AG04449 (cell line): ENCODE measurements at regions of chr5 and their contacts with region 1.

Region 1: GRCh38 chr5:79857714-79858409 is 133.2 kb downstream of the MTX3 start:
- DNase-seq: no peak
- H3K4me3 ChIP-seq: no peak overlapping the region
- CTCF ChIP-seq: peak; percentile 86

Region 2: DNA sequence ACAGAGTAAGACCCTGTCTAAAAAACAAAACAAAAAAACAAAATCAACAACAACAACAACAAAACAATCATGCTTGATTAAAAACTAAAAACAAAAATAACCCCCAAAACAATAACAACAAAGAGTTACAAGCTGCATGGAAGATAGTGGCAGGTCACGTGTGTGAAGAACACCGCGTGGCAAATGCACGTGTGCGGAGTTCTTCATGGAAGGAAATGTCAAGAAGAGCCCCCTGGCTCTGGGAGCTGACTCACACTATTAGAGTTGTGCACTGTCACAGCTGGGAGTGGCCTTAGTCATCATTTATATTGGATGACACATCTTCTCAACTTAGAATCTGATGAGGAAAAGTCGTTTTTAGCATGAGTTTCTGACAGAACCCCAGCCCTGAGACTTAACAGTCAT is 511.4 kb before region 1 on chr5:
- CTCF ChIA-PET with region 1: no interaction called
- POLR2A ChIA-PET with region 1: no interaction called
- DNase-seq: no peak
- H3K4me3 ChIP-seq: no peak overlapping the region
- CTCF ChIP-seq: no peak

Region 3: DNA sequence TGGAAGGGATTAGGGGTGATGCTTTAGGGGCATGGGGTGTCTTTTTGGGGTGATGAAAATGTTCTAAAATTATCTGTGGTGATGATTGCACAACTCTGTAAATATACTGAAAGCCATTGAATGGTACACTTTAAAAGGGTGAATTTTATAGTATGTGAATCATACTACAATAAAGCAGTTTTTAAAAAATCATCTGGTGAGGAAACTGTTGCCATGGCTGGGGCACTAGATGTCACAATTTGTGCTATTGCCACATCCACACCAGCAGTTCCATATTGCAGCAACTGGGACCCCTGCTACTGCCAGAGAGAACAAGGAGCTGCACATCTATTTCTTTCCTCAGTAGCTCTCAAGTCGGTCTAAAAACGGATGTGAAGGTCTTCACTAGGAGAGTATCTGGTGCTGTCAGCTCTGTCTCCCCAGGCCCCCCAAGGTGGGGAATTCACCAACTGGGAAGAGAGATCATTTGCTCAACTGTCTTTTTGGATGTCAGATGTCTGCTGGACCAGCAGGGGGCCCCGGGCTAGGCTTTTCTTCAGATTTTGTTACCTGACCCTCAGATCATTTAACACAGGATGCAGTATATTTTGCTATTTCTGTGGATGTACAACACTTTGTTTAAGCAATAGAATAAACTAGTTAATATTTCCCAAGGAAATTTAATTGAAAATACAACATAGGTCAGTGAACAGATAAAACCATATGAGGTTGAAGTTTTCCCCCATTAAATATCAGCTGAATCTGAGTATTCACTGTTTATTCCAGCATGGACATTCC is 155.1 kb before region 1 on chr5:
- CTCF ChIA-PET with region 1: interaction called, 21 read pairs
- POLR2A ChIA-PET with region 1: no interaction called
- DNase-seq: no peak
- H3K4me3 ChIP-seq: no peak overlapping the region
- CTCF ChIP-seq: peak; percentile 45

Region 4: GRCh38 chr5:79845448-79846197 is 12.2 kb before region 1 on chr5:
- CTCF ChIA-PET with region 1: interaction called, 53 read pairs
- POLR2A ChIA-PET with region 1: no interaction called
- DNase-seq: peak; percentile 50
- H3K4me3 ChIP-seq: no peak overlapping the region
- CTCF ChIP-seq: no peak

Region 5: DNA sequence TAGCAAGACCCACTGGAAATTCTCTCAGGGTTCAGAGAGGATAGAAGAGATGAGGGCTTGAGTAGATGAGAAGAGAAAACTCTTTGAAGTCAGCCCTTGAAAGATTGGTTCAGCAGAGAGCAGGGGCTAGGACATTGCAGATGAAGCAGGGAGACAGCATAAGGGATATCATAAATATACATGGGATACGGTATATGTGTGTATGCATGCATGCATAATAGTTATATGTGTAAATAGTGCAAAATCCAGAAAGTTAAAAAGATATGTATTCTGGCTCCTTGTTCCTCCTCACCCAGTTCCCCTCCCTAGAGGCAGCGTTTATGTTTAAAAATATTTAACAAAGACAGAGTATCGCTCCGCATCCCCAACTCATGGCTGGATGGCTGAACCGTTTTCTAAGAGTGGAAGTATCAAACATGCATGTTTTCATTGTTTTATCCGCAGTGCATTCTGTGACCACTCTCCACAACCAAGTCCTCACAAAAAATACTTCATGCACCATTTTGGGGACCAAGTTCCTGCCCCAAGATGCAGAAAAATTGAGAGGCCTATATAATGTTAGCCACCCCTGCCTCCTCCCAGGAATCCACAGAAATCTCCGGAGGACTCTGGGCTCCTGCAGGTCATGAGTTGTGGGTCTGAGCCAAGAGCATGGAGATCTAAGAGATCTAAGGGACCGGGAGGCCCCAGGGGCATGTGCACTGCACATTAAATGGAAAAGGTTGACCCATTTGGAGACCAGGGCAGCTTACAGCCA is 13.7 kb after region 1 on chr5:
- CTCF ChIA-PET with region 1: interaction called, 12 read pairs
- POLR2A ChIA-PET with region 1: no interaction called
- DNase-seq: no peak
- H3K4me3 ChIP-seq: no peak overlapping the region
- CTCF ChIP-seq: no peak

Region 6: DNA sequence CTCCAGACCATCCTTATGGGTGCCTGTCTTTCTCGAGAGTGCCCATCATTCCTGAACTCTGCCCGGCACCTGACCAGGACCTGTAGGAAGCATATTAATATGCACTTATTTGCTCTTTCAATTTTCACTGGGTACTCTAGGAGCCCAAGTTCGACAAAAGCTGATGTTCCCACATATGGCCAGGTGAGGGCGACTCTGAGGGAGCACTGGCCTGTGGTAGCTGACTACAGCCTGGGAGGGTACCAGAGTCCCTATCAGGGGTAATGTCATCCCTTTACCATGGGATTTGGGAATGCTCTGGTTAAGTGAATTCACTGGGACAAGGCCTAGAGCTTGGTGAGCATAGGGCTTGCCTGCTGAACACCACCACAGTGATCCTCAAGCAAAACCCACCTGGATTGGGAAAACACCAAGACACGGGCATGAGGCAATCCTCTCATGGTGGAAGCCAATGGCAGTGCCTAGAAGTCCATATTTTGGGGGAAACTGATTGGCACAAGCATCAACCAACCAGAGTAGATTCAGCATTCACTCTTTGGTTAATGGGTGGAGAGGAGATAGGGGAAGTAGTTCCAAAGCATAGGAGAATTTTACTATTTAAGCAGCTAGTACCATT is 21.0 kb after region 1 on chr5:
- CTCF ChIA-PET with region 1: interaction called, 12 read pairs
- POLR2A ChIA-PET with region 1: no interaction called
- DNase-seq: no peak
- H3K4me3 ChIP-seq: no peak overlapping the region
- CTCF ChIP-seq: no peak